ENCODE measurements at regions of chr22 and their contacts with region 1.

Region 1: GRCh38 chr22:26606611-26607010 is 11.2 kb downstream of the CRYBB1 start:
- DNase-seq: no peak
- H3K4me3 Mint-ChIP-seq: no peak overlapping the region
- H3K27ac Mint-ChIP-seq: no peak overlapping the region
- H3K4me1 Mint-ChIP-seq: peaks cover 27% of the 10 kb centered on the region
- H3K27me3 Mint-ChIP-seq: peaks cover 8% of the 10 kb centered on the region

Region 2: GRCh38 chr22:26573026-26573662 is 33.5 kb before region 1 on chr22:
- CTCF ChIA-PET with region 1: no interaction called
- POLR2A ChIA-PET with region 1: no interaction called
- DNase-seq: no peak
- H3K4me3 Mint-ChIP-seq: no peak overlapping the region
- H3K27ac Mint-ChIP-seq: peak overlapping the region; percentile 32
- H3K4me1 Mint-ChIP-seq: peaks cover 43% of the 10 kb centered on the region
- H3K27me3 Mint-ChIP-seq: no peaks in the 10 kb centered on the region

Region 3: GRCh38 chr22:26589845-26590736 is 16.5 kb before region 1 on chr22 and contains the start of gene TPST2:
- CTCF ChIA-PET with region 1: interaction called, 10 read pairs
- POLR2A ChIA-PET with region 1: no interaction called
- DNase-seq: peak; percentile 75
- H3K4me3 Mint-ChIP-seq: peak within 1 kb of the TSS; percentile 84
- H3K27ac Mint-ChIP-seq: peak within 1 kb of the TSS; percentile 82
- H3K4me1 Mint-ChIP-seq: peaks cover 76% of the 10 kb centered on the region
- H3K27me3 Mint-ChIP-seq: no peaks in the 10 kb centered on the region
- total RNA-seq, gene TPST2: 25.9 to 26.3 TPM

Region 4: DNA sequence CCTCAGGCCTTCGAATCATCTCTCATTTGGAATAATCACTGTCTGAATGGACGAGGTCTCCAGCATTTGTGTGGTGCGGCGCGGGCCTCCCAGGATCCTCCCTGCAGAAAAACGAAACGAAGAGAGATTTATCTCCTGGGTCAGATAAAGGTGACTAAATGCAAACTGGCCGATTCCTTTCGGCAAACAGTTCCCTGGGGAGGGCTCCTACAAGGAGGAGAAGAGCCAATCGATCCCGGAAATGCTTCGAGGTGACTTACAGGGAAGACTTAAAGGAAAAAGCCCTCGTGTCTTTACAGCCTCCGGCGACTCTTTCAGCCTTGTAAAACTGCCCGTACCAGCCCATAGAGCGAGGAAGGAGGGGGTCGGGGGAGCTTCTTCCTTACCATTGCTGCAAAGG is 177.3 kb after region 1 on chr22:
- CTCF ChIA-PET with region 1: no interaction called
- POLR2A ChIA-PET with region 1: no interaction called
- DNase-seq: no peak
- H3K4me3 Mint-ChIP-seq: no peak overlapping the region
- H3K27ac Mint-ChIP-seq: no peak overlapping the region
- H3K4me1 Mint-ChIP-seq: peaks cover 6% of the 10 kb centered on the region
- H3K27me3 Mint-ChIP-seq: no peaks in the 10 kb centered on the region